Naive thymus-derived CD4-positive, alpha-beta T cell (primary cell): ENCODE measurements at regions of chr12 and their contacts with region 1.

Region 1: DNA sequence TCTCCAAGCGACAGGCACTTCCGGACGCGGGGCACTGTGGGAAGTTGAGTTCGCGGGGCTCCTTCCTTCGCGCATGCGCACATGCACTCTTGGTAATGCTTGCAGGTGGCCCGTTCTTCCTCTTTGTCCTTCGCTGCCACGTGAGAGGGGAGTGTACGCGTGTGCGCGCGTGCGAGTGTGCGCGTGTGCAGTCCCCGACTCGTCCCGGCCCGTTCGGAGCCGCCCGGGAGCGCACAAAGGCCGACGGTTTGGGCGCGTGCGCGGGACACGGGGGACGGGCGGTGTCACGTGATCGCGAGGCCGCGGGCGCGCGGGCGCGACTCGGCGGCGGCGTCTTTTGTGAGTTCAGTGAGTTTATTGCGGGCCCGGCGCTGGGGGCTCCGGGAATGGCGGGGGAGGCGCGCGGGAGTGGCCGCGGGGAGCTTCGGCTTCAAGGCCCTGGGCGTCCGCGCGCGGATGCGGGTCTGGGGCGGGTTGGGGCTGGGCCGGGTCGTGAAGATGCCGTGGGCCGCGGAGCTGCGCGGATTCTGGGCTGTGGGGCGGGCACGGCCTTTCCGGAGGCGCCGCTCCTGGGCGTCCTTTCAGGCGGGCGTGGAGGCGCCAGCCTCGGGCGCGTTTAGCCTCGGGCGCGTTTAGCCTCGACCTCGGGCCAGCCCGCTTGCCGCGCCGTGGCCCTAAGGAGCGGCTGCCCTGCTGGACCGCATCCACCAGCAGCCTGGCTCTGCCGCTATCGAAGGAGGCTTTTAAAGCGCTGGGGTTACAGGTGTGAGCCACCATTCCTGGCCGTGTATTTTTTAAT is at the start of gene ZNF84:
- DNase-seq: peak; percentile 93 to 99 (median 97)
- ATAC-seq: peak; percentile 96
- H3K4me3 ChIP-seq: peak within 1 kb of the TSS; percentile 65
- H3K4me3 Mint-ChIP-seq: peak within 1 kb of the TSS; percentile 78 to 96 (median 94)
- H3K27ac ChIP-seq: peak within 1 kb of the TSS; percentile 94
- H3K27ac Mint-ChIP-seq: peak within 1 kb of the TSS; percentile 87 to 99 (median 94)
- H3K4me1 ChIP-seq: peaks cover 0 to 4% of the 10 kb centered on the region in 2 donors
- H3K4me1 Mint-ChIP-seq: peaks cover 0 to 37% (median 13%) of the 10 kb centered on the region in 7 donors
- H3K27me3 ChIP-seq: no peaks in the 10 kb centered on the region
- H3K27me3 Mint-ChIP-seq: peaks cover 0 to 9% (median 3%) of the 10 kb centered on the region in 5 donors
- total RNA-seq, gene ZNF84: 27.4 to 52.7 (median 31.6) TPM

Region 2: GRCh38 chr12:133130038-133130807 is 92.8 kb after region 1 on chr12 and contains the starts of genes ZNF10 and ZNF891:
- CTCF ChIA-PET with region 1: no interaction called
- POLR2A ChIA-PET with region 1: interaction called, 12 read pairs
- intact Hi-C with region 1: loop called (anchors 1 kb)
- DNase-seq: peak; percentile 96 to 99 (median 98)
- ATAC-seq: peak; percentile 93
- H3K4me3 ChIP-seq: peak within 1 kb of the TSS; percentile 62
- H3K4me3 Mint-ChIP-seq: peak within 1 kb of the TSS; percentile 90 to 99 (median 94)
- H3K27ac ChIP-seq: peak within 1 kb of the TSS; percentile 98
- H3K27ac Mint-ChIP-seq: peak within 1 kb of the TSS; percentile 97 to 100 (median 99)
- H3K4me1 ChIP-seq: peaks cover 0 to 7% of the 10 kb centered on the region in 2 donors
- H3K4me1 Mint-ChIP-seq: peaks cover 15 to 51% (median 27%) of the 10 kb centered on the region in 7 donors
- H3K27me3 ChIP-seq: no peaks in the 10 kb centered on the region
- H3K27me3 Mint-ChIP-seq: no peaks in the 10 kb centered on the region
- total RNA-seq, gene ZNF10: 5.2 to 35.0 (median 29.2) TPM
- total RNA-seq, gene ZNF891: 2.4 to 7.9 (median 6.6) TPM